ENCODE measurements at regions of chr1 and their contacts with region 1.

Region 1: GRCh38 chr1:212432706-212433576 is at the start of gene NENF:
- DNase-seq: peak; percentile 96
- H3K4me3 Mint-ChIP-seq: peak within 1 kb of the TSS; percentile 78
- H3K27ac Mint-ChIP-seq: peak within 1 kb of the TSS; percentile 81
- H3K4me1 Mint-ChIP-seq: peaks cover 43% of the 10 kb centered on the region
- H3K27me3 Mint-ChIP-seq: no peaks in the 10 kb centered on the region
- CTCF ChIP-seq: no peak
- total RNA-seq, gene NENF: 110 and 122 TPM in 2 replicates

Region 2: GRCh38 chr1:212414328-212415106 is 18.4 kb before region 1 on chr1 and contains the start of gene PACC1:
- CTCF ChIA-PET with region 1: interaction called, 5 read pairs
- POLR2A ChIA-PET with region 1: interaction called, 15 read pairs
- intact Hi-C with region 1: no loop called
- DNase-seq: peak; percentile 93
- H3K4me3 Mint-ChIP-seq: peak within 1 kb of the TSS; percentile 80
- H3K27ac Mint-ChIP-seq: peak within 1 kb of the TSS; percentile 18
- H3K4me1 Mint-ChIP-seq: peaks cover 17% of the 10 kb centered on the region
- H3K27me3 Mint-ChIP-seq: no peaks in the 10 kb centered on the region
- CTCF ChIP-seq: no peak
- total RNA-seq, gene PACC1: 23.0 and 23.3 TPM in 2 replicates

Region 3: DNA sequence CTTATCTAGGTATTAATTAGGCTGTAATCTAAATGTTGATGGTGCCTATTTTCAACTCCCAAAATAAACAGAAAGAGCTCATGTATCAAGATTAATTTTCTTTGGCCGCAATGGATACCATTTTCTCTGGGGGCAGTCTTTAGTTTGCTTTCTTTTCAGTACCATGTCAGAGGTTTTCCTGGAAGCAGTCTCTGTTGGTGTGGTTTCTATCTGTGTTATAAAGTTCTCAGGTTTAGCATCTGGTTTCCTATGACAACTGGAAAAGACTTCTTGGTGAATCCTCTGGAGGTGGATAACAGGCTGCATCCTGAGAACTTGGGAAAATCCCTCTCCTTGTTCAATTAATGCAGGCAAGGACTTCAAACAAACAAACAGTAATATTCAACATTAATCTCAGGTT is 305.4 kb after region 1 on chr1:
- CTCF ChIA-PET with region 1: no interaction called
- POLR2A ChIA-PET with region 1: no interaction called
- intact Hi-C with region 1: no loop called
- DNase-seq: no peak
- H3K4me3 Mint-ChIP-seq: no peak overlapping the region
- H3K27ac Mint-ChIP-seq: no peak overlapping the region
- H3K4me1 Mint-ChIP-seq: no peaks in the 10 kb centered on the region
- H3K27me3 Mint-ChIP-seq: no peaks in the 10 kb centered on the region
- CTCF ChIP-seq: no peak

Measured in MCF 10A (cell line).